Psoas muscle (tissue), 8 donors: ENCODE measurements at regions of chr4 and their contacts with region 1.

Region 1: DNA sequence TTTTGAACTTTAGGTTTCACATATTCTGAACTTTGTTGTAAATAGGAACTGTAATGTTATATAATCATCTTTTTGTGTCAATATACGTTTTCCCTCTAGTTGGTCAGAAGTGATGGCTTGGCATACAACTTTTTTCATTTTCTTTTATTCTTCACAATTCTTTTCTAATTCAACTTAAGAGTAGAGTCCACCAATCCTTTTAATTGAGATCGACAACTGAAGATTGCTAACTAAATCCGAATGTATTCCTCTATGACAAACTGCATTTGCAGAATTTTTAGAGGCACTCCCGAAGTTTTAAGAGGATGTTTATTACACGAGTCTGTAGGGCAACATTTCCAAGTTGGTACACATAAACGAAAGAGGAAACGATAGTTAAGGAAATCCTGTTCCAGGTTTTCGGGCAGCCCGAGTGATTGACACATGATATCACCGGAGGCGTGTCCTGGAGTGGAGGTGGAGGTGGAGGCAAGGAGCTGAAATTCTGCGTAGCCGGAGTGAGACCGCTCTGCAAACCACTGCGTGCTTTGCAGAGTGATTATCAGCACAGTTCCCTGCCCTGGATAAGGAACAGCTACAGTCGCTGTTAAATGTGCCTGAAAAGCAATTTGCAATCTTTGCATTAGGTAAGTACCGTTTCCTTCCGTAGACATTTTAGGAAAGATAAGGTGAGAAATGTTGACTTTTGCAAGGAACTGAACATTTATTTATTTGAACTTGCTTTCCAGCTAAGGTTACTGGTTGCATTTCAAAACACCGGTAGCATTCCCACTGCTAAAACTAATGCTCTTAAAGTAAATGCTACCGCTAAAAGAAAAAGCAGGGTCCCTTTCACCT is at the start of gene SPRY1:
- DNase-seq: peak; percentile 87 to 91
- ATAC-seq: peak; percentile 65 to 77 (median 71)
- H3K4me3 ChIP-seq: peak within 1 kb of the TSS; percentile 84
- H3K27ac ChIP-seq: peak within 1 kb of the TSS; percentile 98
- H3K4me1 ChIP-seq: no peaks in the 10 kb centered on the region
- H3K27me3 ChIP-seq: no peaks in the 10 kb centered on the region
- CTCF ChIP-seq: no peak
- total RNA-seq, gene SPRY1: 41.1 to 104 (median 96.9) TPM

Region 2: GRCh38 chr4:123350191-123350544 is 46.4 kb before region 1 on chr4:
- intact Hi-C with region 1: loop called in 1 of 2 experiments (anchors 5 kb)
- DNase-seq: no peak
- ATAC-seq: peak; percentile 47 to 69 (median 50)
- H3K4me3 ChIP-seq: no peak overlapping the region
- H3K27ac ChIP-seq: peak overlapping the region; percentile 12
- H3K4me1 ChIP-seq: peaks cover 20% of the 10 kb centered on the region
- H3K27me3 ChIP-seq: no peaks in the 10 kb centered on the region
- CTCF ChIP-seq: peak; percentile 11

Region 3: GRCh38 chr4:123555233-123555806 is 158.8 kb after region 1 on chr4:
- intact Hi-C with region 1: loop called in 1 of 2 experiments (anchors 2 kb)
- DNase-seq: peak; percentile 87 to 88
- ATAC-seq: peak; percentile 63 to 91 (median 80)
- H3K4me3 ChIP-seq: peak overlapping the region; percentile 24
- H3K27ac ChIP-seq: peak overlapping the region; percentile 66
- H3K4me1 ChIP-seq: peaks cover 22% of the 10 kb centered on the region
- H3K27me3 ChIP-seq: no peaks in the 10 kb centered on the region
- CTCF ChIP-seq: no peak

Region 4: GRCh38 chr4:123649645-123650391 is 253.3 kb after region 1 on chr4:
- intact Hi-C with region 1: loop called (anchors 5 kb)
- DNase-seq: peak; percentile 22 to 59
- ATAC-seq: peak; percentile 77 to 91 (median 84)
- H3K4me3 ChIP-seq: peak overlapping the region; percentile 35
- H3K27ac ChIP-seq: peak overlapping the region; percentile 79
- H3K4me1 ChIP-seq: peaks cover 29% of the 10 kb centered on the region
- H3K27me3 ChIP-seq: no peaks in the 10 kb centered on the region
- CTCF ChIP-seq: no peak

Region 5: GRCh38 chr4:123832173-123833026 is 435.9 kb after region 1 on chr4:
- intact Hi-C with region 1: loop called in 1 of 2 experiments (anchors 2 kb)
- DNase-seq: peak; percentile 65 to 82
- ATAC-seq: peak; percentile 91 to 93 (median 92)
- H3K4me3 ChIP-seq: peak overlapping the region; percentile 44
- H3K27ac ChIP-seq: peak overlapping the region; percentile 93
- H3K4me1 ChIP-seq: peaks cover 26% of the 10 kb centered on the region
- H3K27me3 ChIP-seq: no peaks in the 10 kb centered on the region
- CTCF ChIP-seq: no peak

Region 6: DNA sequence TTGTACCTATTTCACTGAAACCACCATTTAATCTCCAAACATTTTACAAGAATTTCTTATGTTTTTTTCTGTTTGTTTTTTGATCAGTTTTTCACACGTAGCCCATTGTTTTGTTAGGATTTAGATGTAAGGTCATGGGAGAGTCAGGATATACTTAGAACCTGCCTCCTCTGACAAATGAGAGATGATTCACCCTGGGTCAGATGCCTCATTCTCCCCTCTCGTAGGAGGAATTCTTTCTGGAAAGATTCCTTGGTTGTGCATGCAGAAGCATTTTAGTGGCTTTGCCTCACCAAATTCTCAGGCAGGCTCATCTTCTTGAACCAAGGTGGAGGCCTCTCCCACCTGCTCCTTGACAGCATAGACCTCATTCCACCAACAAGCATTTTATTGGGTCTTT is 599.4 kb after region 1 on chr4:
- intact Hi-C with region 1: no loop called
- DNase-seq: no peak
- ATAC-seq: no peak
- H3K4me3 ChIP-seq: no peak overlapping the region
- H3K27ac ChIP-seq: no peak overlapping the region
- H3K4me1 ChIP-seq: no peaks in the 10 kb centered on the region
- H3K27me3 ChIP-seq: no peaks in the 10 kb centered on the region
- CTCF ChIP-seq: no peak

Region 7: DNA sequence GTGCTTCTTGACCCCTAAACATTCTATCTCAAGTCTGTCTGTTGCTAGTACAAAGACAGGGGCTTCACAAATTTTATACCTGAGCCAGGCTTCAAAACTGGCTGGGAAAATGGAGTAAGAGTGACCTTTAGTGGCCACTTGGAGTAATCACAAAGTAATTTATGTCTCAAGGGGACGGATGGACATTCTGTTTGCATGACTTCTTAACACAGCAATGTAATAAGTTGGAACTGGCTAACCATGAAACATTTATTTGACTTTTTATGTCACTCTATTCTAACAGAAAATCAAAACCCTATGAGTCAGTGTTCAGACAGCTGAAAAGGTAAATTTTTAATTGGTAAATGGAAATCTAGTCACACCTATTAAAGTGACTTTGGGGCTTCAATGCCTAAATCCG is 715.4 kb after region 1 on chr4:
- intact Hi-C with region 1: loop called in 1 of 2 experiments (anchors 5 kb)
- DNase-seq: no peak
- ATAC-seq: peak; percentile 76 to 94 (median 90)
- H3K4me3 ChIP-seq: no peak overlapping the region
- H3K27ac ChIP-seq: no peak overlapping the region
- H3K4me1 ChIP-seq: peaks cover 7% of the 10 kb centered on the region
- H3K27me3 ChIP-seq: no peaks in the 10 kb centered on the region
- CTCF ChIP-seq: peak; percentile 72